ENCODE measurements at regions of chr2 and their contacts with region 1.

Region 1: DNA sequence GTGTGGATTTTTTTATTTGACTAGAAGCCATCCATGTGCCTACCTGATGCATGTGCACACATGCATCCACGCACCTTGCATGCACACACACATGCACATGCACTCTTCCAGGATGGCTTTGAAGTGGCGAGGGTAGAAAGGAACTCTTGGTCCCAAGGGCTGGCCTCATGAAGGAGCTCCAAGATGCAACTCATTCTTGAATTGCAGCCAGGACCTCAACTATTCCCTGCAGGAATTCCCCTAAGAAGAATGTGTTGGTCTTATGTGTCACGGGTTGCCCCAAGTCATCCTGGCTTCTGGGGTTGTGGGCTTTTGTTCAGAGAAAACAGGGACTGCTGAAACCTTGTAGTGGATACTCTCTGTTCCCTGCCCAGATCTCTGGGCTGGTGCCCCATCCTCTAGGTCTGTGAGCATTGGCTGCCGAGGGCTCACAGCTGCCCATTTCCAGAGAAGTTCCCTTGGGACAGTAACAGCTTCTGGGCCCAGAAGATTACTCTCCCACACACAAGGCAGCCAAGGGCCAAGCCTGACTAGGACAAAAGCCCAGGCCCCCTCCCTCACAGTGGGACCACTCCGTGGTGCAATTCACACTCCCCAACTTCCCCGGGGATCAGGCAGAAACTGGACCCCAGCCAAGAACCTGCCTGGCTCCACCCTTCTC is 137.6 kb downstream of the COPS8 start:
- DNase-seq: peak; percentile 86

Region 2: GRCh38 chr2:237234268-237234667 is 10.9 kb after region 1 on chr2:
- intact Hi-C with region 1: loop called in 1 of 2 experiments (anchors 1 kb)
- DNase-seq: no peak

Measured in posterior vena cava (tissue), 2 donors.